ENCODE measurements at regions of chr12 and their contacts with region 1.

Region 1: DNA sequence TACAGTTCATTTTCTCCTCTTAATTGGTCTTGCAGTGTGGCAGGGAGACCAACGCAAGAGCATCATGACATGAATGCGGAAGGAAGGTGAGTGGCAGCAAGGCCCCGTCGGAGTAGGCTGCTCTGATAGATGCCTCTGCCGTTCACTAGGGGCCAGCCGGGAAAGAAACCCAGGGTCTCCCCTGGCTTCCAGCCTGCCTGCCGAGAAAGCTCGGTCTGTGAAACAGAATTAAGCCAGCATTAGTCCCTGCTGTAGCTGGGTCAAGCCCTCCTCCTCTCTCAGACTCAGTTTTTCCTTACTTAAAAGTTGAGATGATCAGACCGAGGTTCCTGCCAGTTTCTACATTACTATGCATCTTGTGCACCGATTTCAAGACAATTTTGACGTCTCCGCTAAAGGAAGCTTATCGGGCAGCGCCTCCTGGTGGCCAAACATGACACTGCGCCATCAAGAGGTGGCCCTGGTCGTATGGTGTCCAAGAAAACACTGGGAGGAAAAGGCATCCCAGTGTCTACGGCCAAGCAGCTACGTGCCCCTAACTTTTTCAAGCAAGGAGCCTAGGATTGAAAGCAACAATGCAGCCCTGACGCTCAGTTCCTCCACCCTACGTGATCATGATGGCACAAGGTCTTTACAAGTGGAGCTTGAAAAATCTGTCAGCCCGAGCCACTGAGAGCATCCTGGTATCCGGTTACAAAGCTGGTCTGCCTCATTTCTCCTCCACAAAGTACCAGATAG is 131.6 kb downstream of the KSR2 start:
- DNase-seq: peak; percentile 55 to 80
- ATAC-seq: peak; percentile 60 to 85 (median 76)
- H3K4me3 ChIP-seq: no peak overlapping the region
- H3K4me3 Mint-ChIP-seq: no peak overlapping the region
- H3K27ac ChIP-seq: no peak overlapping the region
- H3K27ac Mint-ChIP-seq: no peak overlapping the region
- H3K4me1 ChIP-seq: peaks cover 4% of the 10 kb centered on the region
- H3K4me1 Mint-ChIP-seq: peaks cover 5 to 9% of the 10 kb centered on the region in 2 donors
- H3K27me3 ChIP-seq: no peaks in the 10 kb centered on the region
- H3K27me3 Mint-ChIP-seq: peaks cover 6 to 13% of the 10 kb centered on the region in 2 donors
- CTCF ChIP-seq: peak; percentile 82

Region 2: DNA sequence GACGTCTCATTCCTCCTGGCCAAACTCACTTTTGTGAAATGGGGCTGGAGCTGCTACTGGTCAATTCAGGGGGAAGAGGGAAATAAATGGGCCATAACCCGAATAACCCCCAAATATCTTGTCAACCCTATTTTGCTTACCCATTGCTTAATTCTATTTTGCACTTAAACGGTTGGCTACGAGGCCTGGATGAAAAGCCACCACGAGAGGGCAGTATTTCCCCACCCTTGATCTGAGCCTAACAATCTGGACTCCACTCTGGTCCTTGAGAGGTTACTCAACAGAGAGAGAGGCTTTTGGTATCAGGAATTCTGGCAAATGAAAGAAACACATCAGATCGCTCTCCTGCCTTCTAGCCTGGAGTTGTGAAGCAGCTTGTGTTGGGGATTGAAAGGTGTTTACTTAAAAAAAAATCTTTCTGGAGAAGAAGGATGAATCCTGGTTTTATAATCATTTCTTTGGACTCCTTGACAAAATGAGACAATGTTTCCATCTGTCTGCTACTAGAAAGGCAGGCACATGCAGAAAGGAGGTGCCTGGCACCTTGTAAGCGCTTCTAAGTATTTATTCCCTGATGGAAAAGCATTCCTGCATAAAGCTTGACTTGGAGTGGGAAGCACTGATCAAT is 624.5 kb before region 1 on chr12:
- intact Hi-C with region 1: loop called (anchors 5 kb)
- DNase-seq: peak; percentile 26 to 80
- ATAC-seq: peak; percentile 49 to 72 (median 60)
- H3K4me3 ChIP-seq: no peak overlapping the region
- H3K4me3 Mint-ChIP-seq: no peak overlapping the region
- H3K27ac ChIP-seq: no peak overlapping the region
- H3K27ac Mint-ChIP-seq: no peak overlapping the region
- H3K4me1 ChIP-seq: no peaks in the 10 kb centered on the region
- H3K4me1 Mint-ChIP-seq: no peaks in the 10 kb centered on the region
- H3K27me3 ChIP-seq: no peaks in the 10 kb centered on the region
- H3K27me3 Mint-ChIP-seq: peaks cover 14 to 18% of the 10 kb centered on the region in 2 donors
- CTCF ChIP-seq: peak; percentile 87

Region 3: DNA sequence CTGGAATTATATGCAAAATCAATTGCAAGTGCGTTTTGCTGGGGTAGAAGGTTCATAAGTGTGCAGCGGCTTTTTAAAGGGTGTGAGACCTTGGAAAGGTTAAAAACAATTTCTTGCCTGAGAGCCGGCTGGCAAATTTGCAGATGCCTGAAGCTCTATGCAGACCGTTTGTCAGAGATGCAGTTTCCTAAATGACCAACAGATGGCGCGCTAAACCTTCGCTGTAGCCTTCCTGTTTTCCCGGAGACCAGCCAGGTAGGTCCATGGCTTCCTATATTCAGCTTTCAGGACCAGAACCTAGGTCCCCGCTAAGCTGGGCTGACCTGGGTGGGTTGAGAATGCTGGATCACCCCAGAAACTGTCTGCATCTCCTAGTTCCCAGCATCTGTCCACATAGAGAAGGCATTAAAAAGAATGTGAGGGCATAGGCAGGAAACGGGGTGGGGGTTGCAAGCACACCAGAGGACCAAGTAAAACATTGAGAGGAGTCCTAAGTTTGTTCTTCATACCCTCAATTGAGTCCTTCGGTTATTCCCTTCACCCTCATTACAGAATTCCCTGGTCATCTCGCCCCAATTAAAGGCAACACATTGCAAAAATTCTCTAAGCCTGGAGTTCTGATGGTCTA is 470.0 kb before region 1 on chr12:
- intact Hi-C with region 1: loop called (anchors 2 kb)
- DNase-seq: peak; percentile 21 to 58
- ATAC-seq: peak in 1 of 3 donors; percentile 45
- H3K4me3 ChIP-seq: no peak overlapping the region
- H3K4me3 Mint-ChIP-seq: no peak overlapping the region
- H3K27ac ChIP-seq: no peak overlapping the region
- H3K27ac Mint-ChIP-seq: no peak overlapping the region
- H3K4me1 ChIP-seq: no peaks in the 10 kb centered on the region
- H3K4me1 Mint-ChIP-seq: no peaks in the 10 kb centered on the region
- H3K27me3 ChIP-seq: no peaks in the 10 kb centered on the region
- H3K27me3 Mint-ChIP-seq: peaks cover 20 to 38% of the 10 kb centered on the region in 2 donors
- CTCF ChIP-seq: peak; percentile 66

Measured in natural killer cell (primary cell).